ENCODE measurements at regions of chr4 and their contacts with region 1.

Region 1: DNA sequence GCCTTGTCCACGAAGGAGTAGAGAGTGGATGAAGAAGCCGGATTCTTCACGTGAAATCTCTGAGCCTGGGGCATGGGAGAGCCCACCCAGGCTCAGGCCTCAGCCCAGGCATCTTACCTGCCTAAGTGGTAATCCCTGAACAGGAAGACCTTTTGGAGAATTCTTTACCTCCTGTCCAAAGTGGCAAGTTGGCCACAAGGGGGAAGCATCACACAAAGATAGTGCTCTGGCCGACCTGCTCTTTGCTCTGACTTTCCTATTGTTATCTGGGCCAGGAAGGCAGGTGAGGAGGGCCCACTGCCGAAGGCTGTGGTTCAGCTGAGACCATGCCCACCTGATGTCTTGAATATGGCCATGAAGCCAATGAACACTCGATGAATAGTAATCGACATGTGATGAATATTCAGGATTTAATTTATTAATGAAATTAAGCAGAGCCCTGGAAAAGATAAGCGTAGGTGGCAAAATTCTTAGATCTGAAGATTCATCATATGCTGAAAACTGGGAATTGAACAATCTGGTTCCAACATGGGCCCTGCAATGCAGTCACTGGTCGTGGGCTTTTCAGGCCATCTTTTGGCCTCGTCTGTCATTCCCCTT is 93.8 kb downstream of the PDGFRA start:
- DNase-seq: peak; percentile 71
- ATAC-seq: peak; percentile 66
- H3K4me3 Mint-ChIP-seq: no peak overlapping the region
- H3K27ac Mint-ChIP-seq: no peak overlapping the region
- H3K4me1 Mint-ChIP-seq: no peaks in the 10 kb centered on the region
- H3K27me3 Mint-ChIP-seq: no peaks in the 10 kb centered on the region
- CTCF ChIP-seq: peak; percentile 66

Region 2: GRCh38 chr4:54277691-54278090 is 45.2 kb before region 1 on chr4:
- CTCF ChIA-PET with region 1: interaction called, 11 read pairs
- POLR2A ChIA-PET with region 1: no interaction called
- intact Hi-C with region 1: no loop called
- DNase-seq: no peak
- ATAC-seq: peak; percentile 24
- H3K4me3 Mint-ChIP-seq: no peak overlapping the region
- H3K27ac Mint-ChIP-seq: no peak overlapping the region
- H3K4me1 Mint-ChIP-seq: no peaks in the 10 kb centered on the region
- H3K27me3 Mint-ChIP-seq: peaks cover 17% of the 10 kb centered on the region
- CTCF ChIP-seq: no peak

Region 3: DNA sequence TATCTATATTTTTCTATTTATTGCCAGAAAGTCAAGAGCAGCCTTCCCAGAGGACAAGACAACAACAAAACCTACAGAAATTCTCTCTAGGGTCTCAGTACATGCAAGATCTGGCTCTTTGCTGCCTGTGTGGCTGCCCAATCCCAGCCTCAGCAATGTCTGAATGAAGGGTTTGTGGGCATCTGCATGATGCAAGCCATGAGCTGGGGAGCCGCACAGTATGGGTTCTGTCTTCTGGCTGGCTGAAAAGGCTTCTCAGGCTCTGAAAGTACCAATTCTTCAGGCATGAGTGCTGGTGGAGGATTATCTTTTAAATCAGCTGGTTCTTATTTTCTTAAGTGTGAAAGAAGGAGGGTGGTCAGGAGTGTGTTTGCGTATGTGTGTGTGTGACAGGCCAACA is 10.7 kb after region 1 on chr4:
- CTCF ChIA-PET with region 1: interaction called, 14 read pairs
- POLR2A ChIA-PET with region 1: interaction called, 4 read pairs
- intact Hi-C with region 1: no loop called
- DNase-seq: no peak
- ATAC-seq: no peak
- H3K4me3 Mint-ChIP-seq: no peak overlapping the region
- H3K27ac Mint-ChIP-seq: no peak overlapping the region
- H3K4me1 Mint-ChIP-seq: no peaks in the 10 kb centered on the region
- H3K27me3 Mint-ChIP-seq: no peaks in the 10 kb centered on the region
- CTCF ChIP-seq: no peak

Region 4: DNA sequence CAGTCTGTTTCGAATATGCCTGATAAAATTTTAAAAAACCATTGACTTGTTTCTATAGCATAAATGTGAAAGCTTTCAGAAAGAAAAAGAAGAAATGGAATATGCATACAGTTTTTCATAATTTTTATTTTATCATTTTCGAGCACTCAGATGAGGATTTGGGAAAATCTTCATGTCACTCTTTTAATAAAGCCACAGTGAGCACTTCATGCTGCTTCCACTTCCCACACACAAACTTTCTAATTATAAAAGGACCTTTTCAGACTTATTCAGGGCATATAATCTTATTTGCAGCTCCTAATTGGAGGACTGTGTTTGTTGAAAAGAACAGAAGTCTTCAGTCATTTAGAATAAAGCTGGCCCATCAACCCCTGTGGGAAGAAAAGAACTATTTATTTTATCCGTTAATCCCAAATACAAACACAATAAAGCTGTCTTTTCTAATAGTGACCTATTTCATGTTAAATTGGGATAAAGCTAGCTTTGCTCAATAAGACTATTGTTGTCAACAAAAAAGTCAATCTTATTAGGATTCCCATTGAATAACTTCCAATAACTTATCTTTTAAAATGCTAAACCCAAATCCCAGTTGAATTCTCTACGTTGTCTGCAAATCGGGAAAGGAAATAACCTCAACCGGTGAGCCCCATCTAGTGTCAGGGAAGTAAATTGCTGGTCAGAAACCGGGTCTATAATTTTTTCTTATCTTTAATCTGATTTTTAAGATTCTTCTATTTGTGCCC is 117.6 kb after region 1 on chr4:
- CTCF ChIA-PET with region 1: interaction called, 18 read pairs
- POLR2A ChIA-PET with region 1: no interaction called
- intact Hi-C with region 1: loop called (anchors 2 kb)
- DNase-seq: peak; percentile 8
- ATAC-seq: no peak
- H3K4me3 Mint-ChIP-seq: no peak overlapping the region
- H3K27ac Mint-ChIP-seq: no peak overlapping the region
- H3K4me1 Mint-ChIP-seq: no peaks in the 10 kb centered on the region
- H3K27me3 Mint-ChIP-seq: peaks cover 12% of the 10 kb centered on the region
- CTCF ChIP-seq: peak; percentile 66